ENCODE measurements at regions of chr2 and their contacts with region 1.

Region 1: GRCh38 chr2:207710814-207711740 is at the start of gene CCNYL1:
- DNase-seq: peak; percentile 92
- ATAC-seq: peak; percentile 95
- H3K4me3 Mint-ChIP-seq: peak within 1 kb of the TSS; percentile 95
- H3K27ac Mint-ChIP-seq: peak within 1 kb of the TSS; percentile 85
- H3K4me1 Mint-ChIP-seq: peaks cover 23% of the 10 kb centered on the region
- H3K27me3 Mint-ChIP-seq: no peaks in the 10 kb centered on the region
- CTCF ChIP-seq: no peak
- total RNA-seq, gene CCNYL1: 12.2 and 13.5 TPM in 2 replicates

Region 2: DNA sequence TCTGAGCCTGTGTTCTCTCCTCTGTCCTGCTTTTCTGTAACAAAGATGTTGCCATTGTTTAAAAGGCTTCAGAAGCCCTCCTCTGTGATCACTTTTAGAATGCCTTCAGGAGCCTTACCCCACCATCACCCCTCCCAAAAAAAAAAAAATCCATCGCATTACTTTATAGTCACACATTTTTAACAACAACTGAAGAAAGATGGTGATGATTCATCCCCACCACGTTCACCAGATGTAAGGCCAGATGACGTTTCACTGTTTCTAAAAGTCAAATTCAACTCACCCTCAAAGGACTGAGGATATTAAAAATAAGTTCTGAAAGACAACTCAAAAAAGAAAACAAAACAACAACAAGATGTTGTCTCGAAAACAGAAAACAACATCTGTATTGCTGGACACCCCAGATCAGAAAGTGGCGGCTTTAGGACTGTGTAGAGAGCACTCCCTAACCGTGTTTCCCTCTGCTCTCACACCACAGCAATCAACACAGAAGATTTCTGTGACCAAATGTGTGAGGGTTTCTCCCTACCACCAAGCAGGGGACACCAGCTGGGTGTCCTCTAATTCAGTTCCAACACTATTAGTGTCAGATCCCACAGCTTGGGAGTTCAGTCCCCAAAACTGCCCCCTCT is 243.2 kb before region 1 on chr2:
- CTCF ChIA-PET with region 1: no interaction called
- POLR2A ChIA-PET with region 1: no interaction called
- intact Hi-C with region 1: no loop called
- DNase-seq: no peak
- ATAC-seq: no peak
- H3K4me3 Mint-ChIP-seq: no peak overlapping the region
- H3K27ac Mint-ChIP-seq: no peak overlapping the region
- H3K4me1 Mint-ChIP-seq: no peaks in the 10 kb centered on the region
- H3K27me3 Mint-ChIP-seq: no peaks in the 10 kb centered on the region
- CTCF ChIP-seq: no peak

Region 3: DNA sequence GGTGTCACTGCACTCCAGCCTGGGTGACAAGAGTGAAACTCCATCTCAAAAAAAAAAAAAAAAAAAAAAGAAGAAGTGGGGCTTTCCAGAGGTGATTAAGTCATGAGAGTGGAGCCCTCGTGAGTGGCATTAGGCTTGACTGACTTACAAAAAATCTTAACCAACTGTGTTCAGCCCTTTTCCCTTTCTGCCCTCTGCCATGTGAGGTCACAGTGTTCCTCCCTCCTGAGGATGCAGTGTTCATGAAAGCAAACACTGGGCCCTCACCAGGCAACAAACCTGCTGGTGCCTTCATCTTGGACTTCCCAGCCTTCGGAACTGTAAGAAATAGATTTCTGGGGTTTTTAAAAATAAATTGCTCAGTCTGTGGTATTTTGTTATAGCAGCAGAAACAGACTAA is 48.9 kb before region 1 on chr2:
- CTCF ChIA-PET with region 1: no interaction called
- POLR2A ChIA-PET with region 1: interaction called, 9 read pairs
- intact Hi-C with region 1: loop called (anchors 1 kb)
- DNase-seq: peak; percentile 33
- ATAC-seq: peak; percentile 97
- H3K4me3 Mint-ChIP-seq: peak overlapping the region; percentile 78
- H3K27ac Mint-ChIP-seq: peak overlapping the region; percentile 97
- H3K4me1 Mint-ChIP-seq: peaks cover 59% of the 10 kb centered on the region
- H3K27me3 Mint-ChIP-seq: no peaks in the 10 kb centered on the region
- CTCF ChIP-seq: no peak

Region 4: GRCh38 chr2:207725873-207726578 is 14.9 kb after region 1 on chr2:
- CTCF ChIA-PET with region 1: interaction called, 3 read pairs
- POLR2A ChIA-PET with region 1: interaction called, 14 read pairs
- intact Hi-C with region 1: loop called (anchors 2 kb)
- DNase-seq: no peak
- ATAC-seq: no peak
- H3K4me3 Mint-ChIP-seq: no peak overlapping the region
- H3K27ac Mint-ChIP-seq: no peak overlapping the region
- H3K4me1 Mint-ChIP-seq: peaks cover 44% of the 10 kb centered on the region
- H3K27me3 Mint-ChIP-seq: no peaks in the 10 kb centered on the region
- CTCF ChIP-seq: no peak

Region 5: GRCh38 chr2:208315081-208315788 is 604.2 kb after region 1 on chr2:
- CTCF ChIA-PET with region 1: no interaction called
- POLR2A ChIA-PET with region 1: no interaction called
- intact Hi-C with region 1: loop called (anchors 5 kb)
- DNase-seq: no peak
- ATAC-seq: peak; percentile 54
- H3K4me3 Mint-ChIP-seq: peak overlapping the region; percentile 89
- H3K27ac Mint-ChIP-seq: peak overlapping the region; percentile 93
- H3K4me1 Mint-ChIP-seq: peaks cover 77% of the 10 kb centered on the region
- H3K27me3 Mint-ChIP-seq: no peaks in the 10 kb centered on the region
- CTCF ChIP-seq: no peak

Measured in activated B cell treated with CpG ODN at 0.5 μM for 24 hours (primary cell).